ENCODE measurements at regions of chr9 and their contacts with region 1.

Region 1: DNA sequence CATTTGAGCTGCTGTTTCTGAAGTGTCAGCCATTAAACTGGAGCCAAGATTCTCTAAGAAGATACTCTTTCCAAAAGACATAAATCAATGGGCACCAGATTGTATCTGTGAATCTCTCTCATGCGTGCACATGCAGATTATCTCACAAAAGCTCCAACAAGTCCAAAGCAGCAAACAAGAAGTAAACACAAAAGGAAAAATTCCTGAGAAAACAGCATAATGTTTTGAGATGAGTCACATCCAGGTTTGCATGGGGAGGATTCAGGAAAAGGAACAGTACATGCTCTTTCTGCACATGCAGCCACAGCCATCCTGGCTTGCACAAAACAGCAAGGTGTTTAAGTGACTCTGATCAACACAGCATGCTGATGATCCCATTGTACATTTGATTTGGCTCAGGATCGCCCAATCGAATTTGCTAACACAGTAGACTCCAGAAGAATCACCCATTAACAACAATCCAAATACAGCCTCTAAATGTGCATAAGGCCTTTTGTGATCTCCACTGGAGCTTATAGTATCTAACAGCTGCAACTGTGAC is 143.1 kb downstream of the ELAVL2 start:
- DNase-seq: no peak
- H3K4me3 ChIP-seq: no peak overlapping the region
- H3K27ac ChIP-seq: peak overlapping the region; percentile 52; the same call in 1 of the 2 replicates
- H3K4me1 ChIP-seq: peaks cover 5 to 39% (median 12%) of the 10 kb centered on the region in 4 experiments; a peak in 6 of 7 replicates
- H3K27me3 ChIP-seq: no peaks in the 10 kb centered on the region
- CTCF ChIP-seq: no peak
- EP300 ChIP-seq: no peak
- POLR2A ChIP-seq: no peak
- RAD21 ChIP-seq: no peak

Region 2: GRCh38 chr9:23821375-23822181 is 138.6 kb after region 1 on chr9:
- CTCF ChIA-PET with region 1: no interaction called
- POLR2A ChIA-PET with region 1: interaction called, 12 read pairs
- DNase-seq: peak in 1 of 2 experiments; percentile 80
- H3K4me3 ChIP-seq: peak overlapping the region; percentile 61 to 79 (median 66)
- H3K27ac ChIP-seq: no peak overlapping the region
- H3K4me1 ChIP-seq: peaks cover 2 to 11% (median 10%) of the 10 kb centered on the region in 4 experiments; a peak in 5 of 7 replicates
- H3K27me3 ChIP-seq: peaks cover 5 to 28% (median 17%) of the 10 kb centered on the region in 4 experiments; a peak in 6 of 7 replicates
- CTCF ChIP-seq: no peak
- EP300 ChIP-seq: no peak
- POLR2A ChIP-seq: peak; percentile 37 to 39; a peak in 1 of 3 replicates
- RAD21 ChIP-seq: 0 out of 4 replicates have a peak, but pooled peaks of 1 of the 2 experiments have one; percentile 9

Measured in H1 (cell line).